MCF 10A (cell line): ENCODE measurements at regions of chr3 and their contacts with region 1.

Region 1: DNA sequence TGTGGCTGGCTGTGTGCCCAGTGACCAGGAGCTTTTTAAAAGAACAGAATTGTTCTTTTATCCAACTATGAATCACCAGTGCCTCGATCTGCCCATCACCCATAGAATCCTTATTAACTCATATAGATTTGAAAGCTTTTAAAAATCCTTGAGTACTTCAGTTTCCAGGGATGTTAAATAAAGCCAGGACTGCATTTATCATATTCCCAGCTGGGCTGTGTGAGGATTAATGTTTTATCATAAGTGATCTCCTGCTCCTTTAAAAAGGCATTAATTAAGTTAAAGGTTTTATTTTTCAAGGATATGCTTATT is 234.0 kb downstream of the MYRIP start:
- DNase-seq: peak; percentile 93
- H3K4me3 Mint-ChIP-seq: no peak overlapping the region
- H3K27ac Mint-ChIP-seq: no peak overlapping the region
- H3K4me1 Mint-ChIP-seq: no peaks in the 10 kb centered on the region
- H3K27me3 Mint-ChIP-seq: no peaks in the 10 kb centered on the region
- CTCF ChIP-seq: no peak

Region 2: DNA sequence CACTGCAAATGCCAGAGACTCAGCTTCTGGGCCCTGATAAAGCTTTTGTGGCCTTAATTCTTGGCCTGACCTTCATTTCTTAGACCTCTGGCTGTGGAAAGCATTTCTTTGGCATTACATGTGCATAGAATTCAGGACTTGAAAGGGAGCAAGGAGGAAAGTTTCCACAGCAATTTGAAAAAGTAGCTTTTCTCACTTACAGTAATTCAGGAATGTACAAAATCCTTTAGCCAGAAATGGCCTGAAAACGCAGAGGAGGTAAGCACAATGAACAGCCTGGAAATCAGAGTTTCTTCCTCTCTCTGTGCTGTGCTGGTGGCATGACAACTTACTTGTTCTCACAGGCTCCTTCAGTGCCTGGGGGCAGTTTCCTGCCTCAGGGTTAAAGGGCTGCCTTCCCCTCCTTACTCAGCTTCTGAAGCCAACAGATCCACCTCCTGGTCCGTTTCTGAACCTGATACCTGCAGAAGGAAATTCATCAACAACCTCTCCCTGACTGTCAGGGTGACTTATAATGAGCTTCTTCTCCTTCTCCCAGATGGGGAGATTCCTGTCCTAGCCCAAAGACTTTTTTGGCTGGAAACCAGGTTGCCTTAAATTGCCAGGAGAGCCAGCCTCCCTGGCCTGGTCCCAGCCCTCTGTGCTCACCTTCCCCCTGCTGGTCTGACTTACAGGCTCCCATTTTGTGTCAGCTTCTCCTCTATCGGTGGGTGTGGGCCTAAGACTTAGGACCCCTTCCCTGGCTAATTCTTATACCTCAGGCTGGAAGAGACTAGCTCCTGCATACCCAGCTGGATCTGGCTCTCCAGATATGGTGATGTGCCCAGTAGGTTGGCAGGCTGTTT is 131.7 kb before region 1 on chr3:
- CTCF ChIA-PET with region 1: no interaction called
- POLR2A ChIA-PET with region 1: no interaction called
- intact Hi-C with region 1: no loop called
- DNase-seq: peak; percentile 21
- H3K4me3 Mint-ChIP-seq: no peak overlapping the region
- H3K27ac Mint-ChIP-seq: no peak overlapping the region
- H3K4me1 Mint-ChIP-seq: peaks cover 18% of the 10 kb centered on the region
- H3K27me3 Mint-ChIP-seq: no peaks in the 10 kb centered on the region
- CTCF ChIP-seq: no peak

Region 3: DNA sequence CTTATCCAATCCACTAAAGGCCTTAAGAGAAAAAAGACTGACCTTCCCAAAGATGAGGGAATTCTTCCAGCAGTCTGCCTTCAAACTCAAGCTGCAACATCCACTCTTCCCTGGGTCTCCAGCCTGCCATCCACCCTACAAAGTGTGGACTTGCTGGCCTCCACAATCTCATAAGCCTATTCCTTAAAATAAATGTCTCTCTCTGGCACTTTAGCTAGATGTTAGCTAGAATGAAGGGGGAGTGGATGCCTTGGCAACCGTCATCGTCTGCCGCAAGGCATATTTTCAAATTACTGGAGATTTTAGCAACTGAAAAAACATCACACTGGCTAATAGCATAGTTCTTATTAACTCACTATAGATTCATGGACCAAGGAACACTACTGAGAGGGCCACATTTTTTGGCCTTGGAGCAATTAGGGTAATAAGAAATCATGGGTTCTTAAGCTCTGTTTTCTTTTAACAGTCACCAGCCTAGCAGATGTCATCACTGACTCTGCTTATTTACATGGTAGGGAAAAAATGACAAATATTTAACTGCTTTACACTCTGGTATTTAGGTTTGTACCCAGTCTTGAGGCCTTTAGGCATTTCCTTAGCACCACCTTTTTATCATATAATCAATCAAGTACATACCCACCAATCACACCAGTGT is 11.3 kb after region 1 on chr3:
- CTCF ChIA-PET with region 1: interaction called, 7 read pairs
- POLR2A ChIA-PET with region 1: interaction called, 19 read pairs
- intact Hi-C with region 1: no loop called
- DNase-seq: no peak
- H3K4me3 Mint-ChIP-seq: no peak overlapping the region
- H3K27ac Mint-ChIP-seq: no peak overlapping the region
- H3K4me1 Mint-ChIP-seq: peaks cover 4% of the 10 kb centered on the region
- H3K27me3 Mint-ChIP-seq: no peaks in the 10 kb centered on the region
- CTCF ChIP-seq: no peak

Region 4: GRCh38 chr3:40137593-40138295 is 94.3 kb after region 1 on chr3:
- CTCF ChIA-PET with region 1: interaction called, 4 read pairs
- POLR2A ChIA-PET with region 1: interaction called, 13 read pairs
- intact Hi-C with region 1: no loop called
- DNase-seq: peak; percentile 82
- H3K4me3 Mint-ChIP-seq: no peak overlapping the region
- H3K27ac Mint-ChIP-seq: no peak overlapping the region
- H3K4me1 Mint-ChIP-seq: peaks cover 15% of the 10 kb centered on the region
- H3K27me3 Mint-ChIP-seq: no peaks in the 10 kb centered on the region
- CTCF ChIP-seq: no peak